ENCODE measurements at regions of chr18 and their contacts with region 1.

Region 1: DNA sequence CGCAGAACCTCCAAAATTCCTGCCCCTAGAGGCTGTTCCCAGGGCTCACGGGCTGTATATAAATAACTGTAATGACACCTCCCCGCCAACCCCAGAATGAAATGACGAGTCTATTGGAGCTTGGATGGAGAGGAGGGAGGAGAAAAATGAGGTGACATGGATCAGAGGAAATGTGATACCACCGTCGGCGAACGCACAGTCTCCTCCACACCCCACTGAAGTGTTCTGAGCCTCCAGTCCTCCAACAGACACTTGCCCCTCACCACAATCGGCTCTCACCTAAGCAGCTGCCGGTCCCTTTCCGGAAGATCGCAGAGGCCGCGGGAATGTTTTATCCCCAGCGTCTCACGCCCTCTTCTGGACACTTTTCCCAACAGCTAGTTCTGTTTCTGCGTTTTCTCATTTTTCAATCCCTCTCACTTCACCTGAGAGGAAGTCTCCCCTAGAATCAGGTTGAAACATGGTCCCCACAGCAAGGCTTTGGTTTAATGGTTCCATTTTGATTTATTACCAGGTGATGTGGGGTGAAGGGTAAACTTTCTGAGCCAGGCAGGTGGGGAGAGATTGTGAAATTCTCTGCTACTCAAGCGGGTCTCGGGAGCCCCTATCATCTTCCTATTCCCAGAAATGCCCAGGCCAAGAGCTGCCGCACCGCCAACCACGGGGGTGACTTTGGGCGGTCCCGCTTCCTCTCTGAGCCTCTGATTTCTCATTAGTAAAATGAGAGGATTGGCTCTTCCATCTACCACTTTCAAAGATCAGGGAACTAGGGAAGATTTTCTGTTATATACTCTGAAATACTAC is 9.1 kb upstream of the MYO5B start:
- DNase-seq: peak; percentile 9
- ATAC-seq: peak; percentile 53; the same call in 1 of the 2 replicates
- H3K4me3 ChIP-seq: no peak overlapping the region; the same call in 1 of the 2 replicates
- H3K27ac ChIP-seq: no peak overlapping the region
- H3K4me1 ChIP-seq: no peaks in the 10 kb centered on the region; the same call in 1 of the 2 replicates
- H3K27me3 ChIP-seq: peaks cover 9% of the 10 kb centered on the region
- CTCF ChIP-seq: peak; percentile 52
- POLR2A ChIP-seq: no peak
- RAD21 ChIP-seq: peak; percentile 53

Region 2: GRCh38 chr18:49944663-49945062 is 259.3 kb before region 1 on chr18:
- CTCF ChIA-PET with region 1: no interaction called
- POLR2A ChIA-PET with region 1: no interaction called
- dilution Hi-C with region 1: no loop called
- in situ Hi-C with region 1: no loop called
- intact Hi-C with region 1: loop called (anchors 10 kb)
- DNase-seq: peak; percentile 7
- ATAC-seq: peak; percentile 62
- H3K4me3 ChIP-seq: no peak overlapping the region
- H3K27ac ChIP-seq: no peak overlapping the region
- H3K4me1 ChIP-seq: no peaks in the 10 kb centered on the region
- H3K27me3 ChIP-seq: peaks cover 4% of the 10 kb centered on the region; the same call in 1 of the 2 replicates
- CTCF ChIP-seq: no peak
- POLR2A ChIP-seq: no peak
- RAD21 ChIP-seq: 0 out of 2 replicates have a peak, but pooled peaks have one; percentile 8

Region 3: DNA sequence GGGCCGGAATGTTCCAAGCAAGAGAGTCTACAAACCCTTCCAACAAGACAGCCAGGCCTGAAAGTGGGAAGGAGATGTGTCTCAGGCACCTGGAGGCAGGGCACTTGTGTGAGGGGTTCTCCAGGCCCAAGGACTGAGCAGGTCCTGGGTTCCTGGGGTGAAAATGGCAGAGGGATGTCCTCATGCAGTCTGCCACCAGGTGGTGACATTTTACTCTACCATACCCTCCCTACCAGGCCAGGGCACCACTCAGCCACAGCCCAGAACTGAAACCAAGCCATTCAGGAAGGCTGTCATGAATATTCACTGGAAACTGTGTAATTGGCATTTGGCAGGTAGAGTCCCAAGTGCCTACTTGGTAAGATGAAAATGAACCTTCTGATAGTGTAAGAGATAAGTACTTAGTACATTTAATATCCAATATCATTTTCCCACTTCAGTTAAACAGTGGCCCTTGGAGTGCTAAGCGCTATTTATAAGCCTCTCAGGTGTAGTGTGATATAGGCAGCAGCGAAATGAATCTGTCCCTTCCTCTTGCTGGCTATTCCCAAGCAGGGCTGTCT is 194.1 kb before region 1 on chr18:
- CTCF ChIA-PET with region 1: no interaction called
- POLR2A ChIA-PET with region 1: no interaction called
- dilution Hi-C with region 1: no loop called
- in situ Hi-C with region 1: no loop called
- intact Hi-C with region 1: loop called (anchors 5 kb)
- DNase-seq: peak; percentile 5
- ATAC-seq: no peak
- H3K4me3 ChIP-seq: no peak overlapping the region
- H3K27ac ChIP-seq: no peak overlapping the region
- H3K4me1 ChIP-seq: peaks cover 6% of the 10 kb centered on the region; the same call in 1 of the 2 replicates
- H3K27me3 ChIP-seq: peaks cover 8% of the 10 kb centered on the region
- CTCF ChIP-seq: peak; percentile 27
- POLR2A ChIP-seq: no peak
- RAD21 ChIP-seq: peak; percentile 22

Region 4: GRCh38 chr18:50061876-50062517 is 142.0 kb before region 1 on chr18:
- CTCF ChIA-PET with region 1: no interaction called
- POLR2A ChIA-PET with region 1: no interaction called
- dilution Hi-C with region 1: no loop called
- in situ Hi-C with region 1: no loop called
- intact Hi-C with region 1: no loop called
- DNase-seq: no peak
- ATAC-seq: no peak
- H3K4me3 ChIP-seq: no peak overlapping the region
- H3K27ac ChIP-seq: no peak overlapping the region
- H3K4me1 ChIP-seq: no peaks in the 10 kb centered on the region
- H3K27me3 ChIP-seq: no peaks in the 10 kb centered on the region
- CTCF ChIP-seq: no peak
- POLR2A ChIP-seq: no peak
- RAD21 ChIP-seq: no peak

Region 5: DNA sequence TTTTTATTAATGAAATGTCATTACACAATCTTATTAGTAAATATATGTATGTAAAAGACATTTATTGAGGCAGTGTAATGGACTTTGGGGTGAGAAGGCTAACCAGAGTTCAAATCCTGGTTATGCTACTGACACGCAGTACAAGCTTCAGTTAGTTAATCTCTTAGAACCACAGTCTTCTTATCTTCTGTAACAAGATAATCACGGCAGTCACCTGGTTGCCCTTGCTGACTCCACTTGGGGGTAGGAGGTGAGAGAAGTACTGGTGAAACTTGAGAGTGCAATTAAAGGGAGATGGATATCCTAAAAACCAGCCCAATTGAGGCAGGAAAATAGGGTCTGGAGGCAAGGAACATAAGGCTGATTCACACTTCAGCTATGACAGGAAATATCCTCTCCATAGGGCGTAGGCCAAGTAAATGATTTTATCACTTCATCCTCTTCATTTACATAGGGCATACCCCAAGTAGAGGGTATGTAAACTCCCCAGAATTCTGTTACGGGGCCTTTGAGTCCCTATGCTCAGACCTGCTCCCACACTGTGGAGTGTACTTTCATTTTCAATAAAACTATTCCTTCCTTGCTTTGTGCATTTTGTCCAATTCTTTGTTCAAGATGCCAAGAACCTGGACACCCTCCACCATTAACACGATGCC is 192.1 kb after region 1 on chr18:
- CTCF ChIA-PET with region 1: no interaction called
- POLR2A ChIA-PET with region 1: no interaction called
- dilution Hi-C with region 1: no loop called
- in situ Hi-C with region 1: no loop called
- intact Hi-C with region 1: no loop called
- DNase-seq: no peak
- ATAC-seq: no peak
- H3K4me3 ChIP-seq: no peak overlapping the region
- H3K27ac ChIP-seq: no peak overlapping the region
- H3K4me1 ChIP-seq: no peaks in the 10 kb centered on the region
- H3K27me3 ChIP-seq: no peaks in the 10 kb centered on the region; the same call in 1 of the 2 replicates
- CTCF ChIP-seq: no peak
- POLR2A ChIP-seq: no peak
- RAD21 ChIP-seq: no peak

Region 6: DNA sequence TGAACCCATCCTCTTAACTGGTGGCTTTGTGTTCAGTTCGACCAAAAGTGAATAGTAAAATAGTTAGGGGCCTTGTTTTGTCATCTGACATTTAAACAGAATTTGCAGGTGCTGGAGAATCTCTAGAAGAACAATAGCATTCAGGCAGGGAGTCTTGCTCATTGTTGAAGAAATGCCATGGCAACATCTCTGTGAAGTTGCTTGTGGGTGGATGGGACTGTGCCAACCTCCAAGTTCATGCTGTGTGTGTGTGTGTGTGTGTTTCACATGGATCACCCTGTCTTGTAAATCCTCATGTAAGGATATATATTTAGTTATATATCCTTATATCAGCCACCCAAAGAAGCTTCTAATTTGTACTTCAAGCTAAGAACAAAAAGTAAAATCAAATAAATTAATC is 237.5 kb after region 1 on chr18:
- CTCF ChIA-PET with region 1: no interaction called
- POLR2A ChIA-PET with region 1: no interaction called
- dilution Hi-C with region 1: no loop called
- in situ Hi-C with region 1: no loop called
- intact Hi-C with region 1: no loop called
- DNase-seq: no peak
- ATAC-seq: no peak
- H3K4me3 ChIP-seq: no peak overlapping the region
- H3K27ac ChIP-seq: no peak overlapping the region
- H3K4me1 ChIP-seq: no peaks in the 10 kb centered on the region
- H3K27me3 ChIP-seq: no peaks in the 10 kb centered on the region
- CTCF ChIP-seq: no peak
- POLR2A ChIP-seq: no peak
- RAD21 ChIP-seq: no peak

Measured in IMR-90 (cell line).